ENCODE measurements at regions of chr3 and their contacts with region 1.

Region 1: DNA sequence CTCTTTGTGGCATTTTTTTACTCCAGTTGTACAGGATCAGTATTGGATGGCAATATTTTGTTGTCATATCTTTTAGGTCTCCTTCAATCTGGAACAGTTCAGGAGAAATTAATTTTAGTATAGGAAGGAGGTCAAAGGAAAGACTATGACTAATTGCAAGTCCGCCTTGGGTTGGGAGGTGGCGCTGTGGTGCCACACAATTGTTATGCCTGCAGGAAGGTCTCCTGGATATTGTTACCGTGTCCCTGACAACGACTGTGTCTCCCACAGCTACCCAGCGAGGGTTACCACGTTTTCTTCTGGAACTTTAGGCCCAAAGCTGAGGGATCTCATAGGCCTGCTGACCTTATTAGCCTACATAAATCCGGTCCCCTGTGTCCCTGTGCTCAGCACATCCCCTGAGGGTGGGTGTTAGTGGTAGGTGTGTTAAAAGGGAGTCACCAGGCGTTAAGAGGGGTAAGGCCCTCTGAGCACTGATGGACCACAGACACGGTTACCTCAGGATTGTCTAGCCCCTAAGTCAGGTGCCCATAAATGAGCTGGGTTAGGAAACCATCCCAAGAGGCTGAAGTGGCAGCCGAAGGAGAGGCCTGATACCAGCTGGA is 31.5 kb downstream of the KCNAB1 start:
- DNase-seq: peak; percentile 73
- H3K4me3 Mint-ChIP-seq: no peak overlapping the region
- H3K27ac Mint-ChIP-seq: no peak overlapping the region
- H3K4me1 Mint-ChIP-seq: peaks cover 3% of the 10 kb centered on the region
- H3K27me3 Mint-ChIP-seq: no peaks in the 10 kb centered on the region

Region 2: DNA sequence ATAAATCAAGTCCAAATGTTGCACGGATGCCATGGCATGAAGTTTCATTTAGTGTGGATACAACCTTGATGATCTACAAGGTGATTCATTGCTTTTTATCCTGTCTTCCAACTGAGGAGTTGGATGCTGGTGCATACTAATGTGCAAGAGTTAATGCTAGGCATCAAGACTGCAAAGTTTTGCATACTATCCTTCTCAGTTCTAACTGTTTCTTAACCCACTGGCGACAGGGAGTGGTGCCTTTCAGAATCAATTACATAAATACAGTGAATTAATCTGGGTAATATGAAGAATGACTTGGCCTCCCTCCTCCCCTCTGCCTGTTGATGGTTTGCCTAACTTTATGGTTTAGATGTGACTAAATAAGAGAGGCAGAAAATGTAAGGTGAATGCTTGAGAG is 11.9 kb after region 1 on chr3:
- CTCF ChIA-PET with region 1: interaction called, 11 read pairs
- POLR2A ChIA-PET with region 1: no interaction called
- intact Hi-C with region 1: no loop called
- DNase-seq: no peak
- H3K4me3 Mint-ChIP-seq: no peak overlapping the region
- H3K27ac Mint-ChIP-seq: no peak overlapping the region
- H3K4me1 Mint-ChIP-seq: peaks cover 11% of the 10 kb centered on the region
- H3K27me3 Mint-ChIP-seq: peaks cover 2% of the 10 kb centered on the region

Region 3: DNA sequence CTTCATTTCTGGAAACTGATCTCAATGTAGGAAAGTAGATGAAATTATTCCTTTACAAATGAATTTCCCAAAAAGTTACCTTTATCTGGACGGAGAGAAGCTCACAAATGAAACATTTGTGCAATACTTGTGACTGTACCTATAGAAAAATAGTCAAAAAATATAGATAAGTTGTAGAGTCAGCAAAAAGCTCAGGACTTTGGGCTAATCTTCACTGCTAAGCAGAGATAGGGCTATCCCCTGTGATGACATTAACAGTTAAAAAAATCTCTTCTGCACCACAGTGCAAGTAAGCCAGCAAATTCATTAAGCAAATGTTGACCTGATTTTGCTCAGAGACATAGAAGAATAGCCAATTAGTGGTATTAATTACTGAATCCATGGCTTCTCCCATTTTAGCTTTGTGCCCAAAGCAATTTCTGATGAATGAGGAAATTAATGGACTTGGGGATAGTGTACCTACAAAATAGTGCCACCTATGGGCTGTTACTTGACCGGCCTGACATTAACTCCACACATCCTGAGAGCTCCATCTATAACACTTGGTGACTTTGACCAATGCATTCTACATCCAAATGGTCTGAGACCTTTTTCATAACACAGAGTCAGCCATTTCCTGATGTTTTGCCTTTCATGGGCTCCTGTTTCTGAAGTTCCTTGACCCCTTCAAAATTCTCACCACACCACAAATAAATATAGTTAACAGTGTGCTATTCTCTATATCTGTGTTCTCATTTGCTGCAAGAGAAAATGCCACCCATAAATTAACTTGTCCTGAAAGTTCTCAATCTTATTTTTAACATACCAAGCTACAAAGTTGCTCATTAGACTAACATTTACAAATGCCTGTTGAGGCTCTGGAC is 298.0 kb after region 1 on chr3:
- CTCF ChIA-PET with region 1: interaction called, 15 read pairs
- POLR2A ChIA-PET with region 1: no interaction called
- intact Hi-C with region 1: loop called (anchors 1 kb)
- DNase-seq: no peak
- H3K4me3 Mint-ChIP-seq: no peak overlapping the region
- H3K27ac Mint-ChIP-seq: no peak overlapping the region
- H3K4me1 Mint-ChIP-seq: no peaks in the 10 kb centered on the region
- H3K27me3 Mint-ChIP-seq: no peaks in the 10 kb centered on the region

Region 4: DNA sequence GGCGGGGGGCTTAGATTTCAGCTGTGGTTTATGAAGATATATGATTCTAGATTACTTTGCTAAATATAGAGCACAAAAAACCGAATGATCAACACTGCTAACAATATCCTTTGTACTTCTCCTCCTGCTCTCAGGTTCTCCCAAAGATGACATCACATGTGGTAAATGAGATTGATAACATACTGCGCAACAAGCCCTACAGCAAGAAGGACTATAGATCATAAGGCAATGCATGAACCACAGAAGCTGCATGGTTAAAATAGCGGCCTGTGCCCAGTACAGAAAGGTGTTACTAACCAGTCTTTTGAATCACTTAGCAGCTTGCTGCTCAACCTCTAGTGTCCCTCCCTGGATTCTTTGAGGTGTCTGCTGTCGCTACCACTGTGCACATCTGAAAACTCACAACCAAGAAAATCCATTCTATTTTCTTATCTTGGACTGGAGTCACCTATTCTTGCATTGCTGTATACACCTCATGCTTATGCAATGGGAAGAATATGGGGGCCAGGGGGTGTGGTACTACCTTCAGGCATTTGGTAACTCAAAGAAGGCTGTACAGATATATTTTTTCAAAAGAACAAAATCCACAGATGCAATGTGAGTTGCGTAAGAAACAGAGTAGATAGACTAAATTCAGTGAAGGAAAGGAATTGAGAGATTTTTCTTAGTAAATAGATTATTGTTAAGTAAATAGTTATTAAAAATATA is 384.8 kb after region 1 on chr3:
- CTCF ChIA-PET with region 1: interaction called, 16 read pairs
- POLR2A ChIA-PET with region 1: no interaction called
- intact Hi-C with region 1: loop called (anchors 1 kb)
- DNase-seq: no peak
- H3K4me3 Mint-ChIP-seq: no peak overlapping the region
- H3K27ac Mint-ChIP-seq: no peak overlapping the region
- H3K4me1 Mint-ChIP-seq: peaks cover 8% of the 10 kb centered on the region
- H3K27me3 Mint-ChIP-seq: no peaks in the 10 kb centered on the region

Region 5: DNA sequence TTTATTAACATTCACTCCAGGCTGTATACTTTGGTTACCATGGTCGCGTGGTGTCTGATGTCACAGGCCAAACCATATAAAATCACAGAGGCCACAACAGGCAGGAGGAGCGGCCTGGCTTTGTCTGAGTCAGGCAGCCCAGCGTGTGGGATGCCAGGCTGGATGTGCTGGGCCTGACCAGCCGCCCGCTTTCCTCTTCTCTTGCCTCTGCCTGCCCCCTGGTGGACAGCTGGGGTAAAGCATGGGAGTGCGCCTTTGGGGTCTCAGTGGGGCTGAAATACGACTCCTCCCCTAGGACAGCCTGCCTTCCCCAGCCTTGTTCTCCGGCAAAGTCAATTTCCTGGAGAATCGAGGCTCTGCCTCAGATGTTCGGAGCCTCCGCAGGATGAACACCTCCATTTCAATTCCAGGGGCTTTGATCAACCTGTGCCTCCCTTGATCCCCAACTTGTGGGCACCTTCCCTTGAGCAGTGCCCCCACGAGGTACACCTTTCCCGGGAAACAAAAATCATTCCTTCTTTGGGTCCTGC is 929.8 kb after region 1 on chr3:
- CTCF ChIA-PET with region 1: interaction called, 5 read pairs
- POLR2A ChIA-PET with region 1: no interaction called
- intact Hi-C with region 1: loop called (anchors 1 kb)
- DNase-seq: peak; percentile 90
- H3K4me3 Mint-ChIP-seq: no peak overlapping the region
- H3K27ac Mint-ChIP-seq: no peak overlapping the region
- H3K4me1 Mint-ChIP-seq: peaks cover 31% of the 10 kb centered on the region
- H3K27me3 Mint-ChIP-seq: no peaks in the 10 kb centered on the region

Region 6: DNA sequence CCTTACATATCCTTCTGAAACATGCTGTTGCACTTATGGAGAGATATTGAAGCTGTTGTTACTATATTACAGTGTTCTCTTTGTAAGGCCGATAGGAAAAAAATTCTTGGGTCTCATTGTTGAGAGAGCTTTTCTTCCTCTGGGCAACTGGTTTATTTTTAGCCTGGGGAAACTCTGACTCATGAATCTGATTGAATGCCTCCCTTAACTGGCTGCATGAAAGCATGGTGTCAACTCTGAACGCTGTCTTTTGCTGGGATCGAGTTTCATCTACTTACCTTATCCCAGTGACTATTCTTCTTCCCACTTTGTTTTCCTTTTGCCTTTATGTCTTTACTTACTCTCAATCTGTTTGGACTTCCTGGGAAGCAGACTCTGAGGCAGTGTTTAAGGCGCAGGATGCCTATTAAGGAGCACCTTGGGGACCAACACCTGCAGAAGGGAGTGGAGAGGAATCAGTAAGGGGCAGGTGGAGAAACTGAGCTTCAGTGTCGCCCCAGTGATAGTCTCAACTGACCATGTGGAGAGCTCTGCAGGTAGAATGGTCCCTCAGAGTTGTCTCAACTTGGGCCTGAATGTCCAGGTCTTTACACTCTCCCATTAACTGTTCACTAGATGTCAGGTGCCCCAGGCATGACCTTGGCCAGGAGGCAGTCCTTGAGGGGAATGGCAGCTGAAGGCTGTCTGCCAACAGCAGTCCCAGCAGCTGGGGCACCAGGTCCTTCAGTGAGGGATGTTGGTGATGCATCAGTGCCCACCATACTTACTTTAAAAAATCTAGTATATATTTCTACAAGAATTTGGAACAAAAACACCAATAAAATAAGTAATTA is 1096.9 kb after region 1 on chr3:
- CTCF ChIA-PET with region 1: no interaction called
- POLR2A ChIA-PET with region 1: no interaction called
- intact Hi-C with region 1: no loop called
- DNase-seq: no peak
- H3K4me3 Mint-ChIP-seq: no peak overlapping the region
- H3K27ac Mint-ChIP-seq: no peak overlapping the region
- H3K4me1 Mint-ChIP-seq: no peaks in the 10 kb centered on the region
- H3K27me3 Mint-ChIP-seq: no peaks in the 10 kb centered on the region